ENCODE measurements at regions of chr2 and their contacts with region 1.

Region 1: GRCh38 chr2:147989809-147990403 is 30.6 kb downstream of the ORC4 start:
- DNase-seq: no peak
- H3K4me3 ChIP-seq: no peak overlapping the region
- H3K27ac ChIP-seq: no peak overlapping the region
- H3K4me1 ChIP-seq: peaks cover 0 to 4% (median 1%) of the 10 kb centered on the region in 4 experiments; a peak in 3 of 7 replicates
- H3K27me3 ChIP-seq: no peaks in the 10 kb centered on the region
- CTCF ChIP-seq: peak in 2 of 3 experiments; percentile 50 to 76; a peak in 2 of 4 replicates
- EP300 ChIP-seq: no peak
- POLR2A ChIP-seq: no peak
- RAD21 ChIP-seq: peak; percentile 67 to 75

Region 2: DNA sequence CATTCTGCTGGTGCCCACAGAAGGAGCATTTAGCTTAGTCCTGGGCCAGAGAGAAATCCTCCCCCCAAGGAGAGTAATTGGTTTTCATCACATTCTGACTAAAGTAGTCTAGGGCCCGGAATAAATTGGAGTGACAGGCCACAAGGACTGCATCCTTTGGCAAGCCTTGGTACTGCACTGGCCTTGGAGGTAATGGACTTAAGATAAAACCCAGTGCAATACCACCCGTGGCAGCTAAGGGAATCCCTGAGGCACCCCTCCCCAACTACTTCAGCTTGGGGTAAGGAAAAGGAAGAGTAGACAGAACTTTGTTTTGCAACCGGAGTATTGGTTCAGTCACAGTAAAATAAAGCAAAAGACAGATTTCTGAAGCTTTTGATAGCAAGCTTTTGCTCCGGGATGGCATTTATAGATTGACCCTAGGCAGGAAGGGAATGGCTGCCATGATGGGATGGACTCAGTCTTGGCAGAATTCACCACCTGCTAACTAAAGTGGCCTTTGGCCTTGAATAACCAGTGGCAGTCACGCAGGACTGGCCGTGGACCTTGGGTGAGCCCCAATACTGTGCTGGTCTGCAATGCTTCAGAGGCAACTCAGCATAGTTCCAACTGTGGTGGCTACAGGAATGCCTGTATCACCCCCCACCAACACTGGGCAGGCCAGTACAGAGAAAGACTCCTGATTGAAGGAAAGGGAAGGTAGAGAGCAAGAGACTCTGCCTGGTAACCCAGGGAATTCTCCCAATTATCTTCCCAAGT is 16.5 kb after region 1 on chr2:
- CTCF ChIA-PET with region 1: interaction called, 15 read pairs
- POLR2A ChIA-PET with region 1: no interaction called
- DNase-seq: no peak
- H3K4me3 ChIP-seq: no peak overlapping the region
- H3K27ac ChIP-seq: no peak overlapping the region
- H3K4me1 ChIP-seq: peaks cover 0 to 5% (median 2%) of the 10 kb centered on the region in 4 experiments; a peak in 2 of 7 replicates
- H3K27me3 ChIP-seq: no peaks in the 10 kb centered on the region
- CTCF ChIP-seq: peak; percentile 16 to 56 (median 49)
- EP300 ChIP-seq: no peak
- POLR2A ChIP-seq: no peak
- RAD21 ChIP-seq: no peak

Region 3: DNA sequence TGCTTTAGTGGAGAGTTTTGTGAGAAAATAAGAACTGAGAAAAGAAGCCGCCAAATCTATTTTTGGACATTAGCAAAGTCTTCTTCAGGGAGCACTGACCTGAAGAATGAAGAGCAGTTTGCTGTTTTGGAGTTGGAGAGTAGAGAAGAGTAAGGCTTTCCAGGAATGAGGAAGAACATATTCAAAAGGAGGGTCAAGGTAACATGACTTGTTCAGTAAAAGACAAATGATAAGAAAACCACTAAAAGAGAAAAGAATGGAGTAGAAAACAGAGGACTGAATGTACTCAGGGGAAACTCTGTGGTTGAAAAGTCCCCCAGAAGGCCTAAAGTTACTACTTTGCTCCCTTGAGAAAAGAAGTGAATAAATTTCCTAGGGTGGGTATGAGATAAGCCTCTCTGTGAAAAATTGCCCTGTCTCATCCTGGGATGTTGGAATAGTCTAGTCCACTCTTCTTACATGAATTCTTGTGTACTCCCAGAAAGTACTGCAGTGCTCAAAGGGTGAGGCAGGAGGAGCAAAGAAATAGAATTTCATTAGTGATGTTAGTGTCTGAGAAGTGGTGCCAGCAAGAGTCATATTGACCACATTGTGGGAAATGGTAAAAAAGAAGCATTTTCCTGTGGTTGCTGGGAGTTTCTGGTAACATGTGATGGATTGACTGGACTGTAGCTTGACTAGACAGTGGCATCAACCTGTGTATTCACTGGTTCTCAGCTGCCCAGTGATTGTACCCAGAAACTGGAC is 58.7 kb after region 1 on chr2:
- CTCF ChIA-PET with region 1: no interaction called
- POLR2A ChIA-PET with region 1: no interaction called
- DNase-seq: no peak
- H3K4me3 ChIP-seq: no peak overlapping the region
- H3K27ac ChIP-seq: no peak overlapping the region
- H3K4me1 ChIP-seq: peaks cover 0 to 2% (median 0%) of the 10 kb centered on the region in 4 experiments; a peak in 2 of 7 replicates
- H3K27me3 ChIP-seq: no peaks in the 10 kb centered on the region
- CTCF ChIP-seq: no peak
- EP300 ChIP-seq: no peak
- POLR2A ChIP-seq: no peak
- RAD21 ChIP-seq: no peak

Region 4: GRCh38 chr2:148067801-148068200 is 77.9 kb after region 1 on chr2:
- CTCF ChIA-PET with region 1: interaction called, 11 read pairs
- POLR2A ChIA-PET with region 1: no interaction called
- DNase-seq: no peak
- H3K4me3 ChIP-seq: no peak overlapping the region
- H3K27ac ChIP-seq: no peak overlapping the region
- H3K4me1 ChIP-seq: no peaks in the 10 kb centered on the region; a peak in 1 of 7 replicates
- H3K27me3 ChIP-seq: no peaks in the 10 kb centered on the region
- CTCF ChIP-seq: no peak
- EP300 ChIP-seq: no peak
- POLR2A ChIP-seq: no peak
- RAD21 ChIP-seq: no peak

Region 5: GRCh38 chr2:148201075-148202004 is 211.4 kb after region 1 on chr2:
- CTCF ChIA-PET with region 1: interaction called, 54 read pairs
- POLR2A ChIA-PET with region 1: no interaction called
- DNase-seq: peak; percentile 84 to 86
- H3K4me3 ChIP-seq: peak overlapping the region in 1 of 4 experiments; percentile 29; a peak in 1 of 8 replicates
- H3K27ac ChIP-seq: no peak overlapping the region
- H3K4me1 ChIP-seq: peaks cover 0 to 4% (median 4%) of the 10 kb centered on the region in 4 experiments; a peak in 5 of 7 replicates
- H3K27me3 ChIP-seq: no peaks in the 10 kb centered on the region
- CTCF ChIP-seq: peak; percentile 95 to 98 (median 98)
- EP300 ChIP-seq: no peak
- POLR2A ChIP-seq: no peak
- RAD21 ChIP-seq: peak; percentile 94 to 98

Region 6: GRCh38 chr2:148509288-148509902 is 519.5 kb after region 1 on chr2:
- CTCF ChIA-PET with region 1: interaction called, 18 read pairs
- POLR2A ChIA-PET with region 1: no interaction called
- DNase-seq: peak; percentile 71 to 91
- H3K4me3 ChIP-seq: no peak overlapping the region
- H3K27ac ChIP-seq: no peak overlapping the region
- H3K4me1 ChIP-seq: peaks cover 0 to 2% (median 0%) of the 10 kb centered on the region in 4 experiments; a peak in 1 of 7 replicates
- H3K27me3 ChIP-seq: no peaks in the 10 kb centered on the region
- CTCF ChIP-seq: peak; percentile 91 to 96 (median 93)
- EP300 ChIP-seq: peak in 1 of 2 experiments; percentile 8; a peak in 1 of 3 replicates
- POLR2A ChIP-seq: no peak
- RAD21 ChIP-seq: peak; percentile 98 to 99

Measured in H1 (cell line).